Heart left ventricle (tissue), 16 donors: ENCODE measurements at regions of chr12 and their contacts with region 1.

Region 1: GRCh38 chr12:113980537-113981337 is 14.6 kb upstream of the RBM19 start:
- DNase-seq: peak in 1 of 5 donors; percentile 34
- ATAC-seq: peak in 3 of 4 donors; percentile 57 to 73 (median 67)
- H3K4me3 ChIP-seq: no peak overlapping the region
- H3K27ac ChIP-seq: no peak overlapping the region
- H3K4me1 ChIP-seq: no peaks in the 10 kb centered on the region
- H3K27me3 ChIP-seq: peaks cover 0 to 36% (median 10%) of the 10 kb centered on the region in 9 donors
- CTCF ChIP-seq: peak; percentile 77 to 96 (median 88)
- POLR2A ChIP-seq: no peak

Region 2: DNA sequence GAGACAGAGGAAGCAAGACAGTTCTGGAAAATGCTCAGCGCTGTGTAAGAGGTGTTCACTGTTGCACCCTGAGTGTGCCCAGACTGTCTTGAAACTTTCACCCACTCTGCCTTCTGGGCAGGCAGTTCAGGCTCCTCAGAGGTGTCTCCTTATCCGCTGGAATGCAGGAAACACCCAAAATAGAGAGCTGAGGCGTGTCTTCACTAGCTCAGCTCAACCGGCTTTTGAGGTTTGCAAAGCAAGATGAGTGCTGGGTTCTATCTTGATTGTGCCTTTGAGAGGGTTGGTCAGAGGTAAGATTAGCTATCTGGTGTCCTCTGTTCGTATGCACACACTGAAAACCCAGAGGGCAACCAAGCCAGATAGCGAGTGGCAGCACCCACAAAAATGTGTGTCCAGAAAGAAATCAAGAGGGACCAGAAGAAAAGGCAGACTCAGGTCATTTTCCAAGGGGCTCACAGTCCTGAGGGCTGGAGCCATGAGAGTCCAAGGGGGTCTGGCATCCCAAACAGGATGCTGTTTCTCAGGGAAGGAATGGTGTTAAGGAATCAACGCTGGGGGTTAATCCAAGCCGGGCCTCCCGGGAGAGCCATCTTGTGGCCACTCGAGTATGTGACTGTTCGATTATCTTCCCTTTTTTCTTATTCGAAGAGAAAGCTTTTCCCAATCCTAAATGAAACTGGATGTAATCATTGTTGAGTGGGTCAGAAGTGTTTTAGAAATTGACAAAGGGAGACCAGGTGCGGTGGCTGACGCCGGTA is 656.2 kb after region 1 on chr12:
- intact Hi-C with region 1: loop called in 4 of 10 experiments (anchors 5 to 10 kb)
- DNase-seq: no peak
- ATAC-seq: no peak
- H3K4me3 ChIP-seq: no peak overlapping the region
- H3K27ac ChIP-seq: no peak overlapping the region
- H3K4me1 ChIP-seq: no peaks in the 10 kb centered on the region
- H3K27me3 ChIP-seq: peaks cover 0 to 5% (median 0%) of the 10 kb centered on the region in 9 donors
- CTCF ChIP-seq: peak in 6 of 12 donors; percentile 10 to 36 (median 17)
- POLR2A ChIP-seq: no peak